A673 (cell line): ENCODE measurements at regions of chr18 and their contacts with region 1.

Region 1: GRCh38 chr18:49321800-49322461 is 138.5 kb downstream of the DYM start:
- DNase-seq: no peak
- H3K4me3 ChIP-seq: no peak overlapping the region
- H3K27ac ChIP-seq: no peak overlapping the region
- H3K4me1 ChIP-seq: peaks cover 8% of the 10 kb centered on the region
- H3K27me3 ChIP-seq: no peaks in the 10 kb centered on the region
- CTCF ChIP-seq: no peak

Region 2: GRCh38 chr18:50231621-50232020 is 909.7 kb after region 1 on chr18:
- CTCF ChIA-PET with region 1: no interaction called
- POLR2A ChIA-PET with region 1: interaction called, 16 read pairs
- intact Hi-C with region 1: no loop called
- DNase-seq: no peak
- H3K4me3 ChIP-seq: no peak overlapping the region
- H3K27ac ChIP-seq: no peak overlapping the region
- H3K4me1 ChIP-seq: no peaks in the 10 kb centered on the region
- H3K27me3 ChIP-seq: peaks cover 20% of the 10 kb centered on the region
- CTCF ChIP-seq: no peak